ENCODE measurements at regions of chr12 and their contacts with region 1.

Region 1: DNA sequence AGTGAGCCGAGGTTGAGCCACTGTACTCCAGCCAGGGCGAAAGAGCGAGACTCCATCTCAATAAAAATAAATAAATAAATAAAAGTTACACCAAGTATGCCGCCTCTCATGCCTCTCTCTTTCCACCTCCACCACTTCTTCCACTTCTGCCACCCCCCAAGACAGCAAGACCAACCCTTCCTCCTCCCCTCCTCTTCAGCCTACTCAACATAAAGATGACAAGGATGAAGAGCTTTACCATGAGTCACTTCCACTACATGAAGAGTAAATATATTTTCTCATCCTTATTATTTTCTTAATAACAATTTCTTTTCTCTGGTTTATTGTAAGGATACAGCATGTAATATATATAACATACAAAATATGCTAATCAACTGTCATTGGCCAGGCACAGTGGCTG is 3.6 kb upstream of the TMED2 start:
- DNase-seq: no peak
- H3K4me3 ChIP-seq: no peak overlapping the region
- H3K27ac ChIP-seq: no peak overlapping the region
- H3K4me1 ChIP-seq: peaks cover 15 to 16% of the 10 kb centered on the region in 2 donors
- H3K27me3 ChIP-seq: no peaks in the 10 kb centered on the region
- CTCF ChIP-seq: no peak

Region 2: GRCh38 chr12:122895705-122896636 is 684.8 kb before region 1 on chr12 and contains the start of gene VPS37B:
- intact Hi-C with region 1: no loop called
- DNase-seq: peak; percentile 65 to 94
- H3K4me3 ChIP-seq: peak within 1 kb of the TSS; percentile 89 to 98
- H3K27ac ChIP-seq: peak within 1 kb of the TSS; percentile 84 to 94
- H3K4me1 ChIP-seq: peaks cover 0 to 28% of the 10 kb centered on the region in 2 donors
- H3K27me3 ChIP-seq: no peaks in the 10 kb centered on the region
- CTCF ChIP-seq: peak in 1 of 3 experiments; percentile 44
- total RNA-seq, gene VPS37B: 31.8 TPM

Region 3: GRCh38 chr12:123388177-123388947 is 192.4 kb before region 1 on chr12:
- intact Hi-C with region 1: loop called (anchors 1 kb)
- DNase-seq: peak; percentile 33 to 90
- H3K4me3 ChIP-seq: peak overlapping the region; percentile 57 to 71
- H3K27ac ChIP-seq: peak overlapping the region; percentile 84 to 93
- H3K4me1 ChIP-seq: peaks cover 11 to 41% of the 10 kb centered on the region in 2 donors
- H3K27me3 ChIP-seq: no peaks in the 10 kb centered on the region
- CTCF ChIP-seq: peak in 1 of 3 experiments; percentile 25

Region 4: DNA sequence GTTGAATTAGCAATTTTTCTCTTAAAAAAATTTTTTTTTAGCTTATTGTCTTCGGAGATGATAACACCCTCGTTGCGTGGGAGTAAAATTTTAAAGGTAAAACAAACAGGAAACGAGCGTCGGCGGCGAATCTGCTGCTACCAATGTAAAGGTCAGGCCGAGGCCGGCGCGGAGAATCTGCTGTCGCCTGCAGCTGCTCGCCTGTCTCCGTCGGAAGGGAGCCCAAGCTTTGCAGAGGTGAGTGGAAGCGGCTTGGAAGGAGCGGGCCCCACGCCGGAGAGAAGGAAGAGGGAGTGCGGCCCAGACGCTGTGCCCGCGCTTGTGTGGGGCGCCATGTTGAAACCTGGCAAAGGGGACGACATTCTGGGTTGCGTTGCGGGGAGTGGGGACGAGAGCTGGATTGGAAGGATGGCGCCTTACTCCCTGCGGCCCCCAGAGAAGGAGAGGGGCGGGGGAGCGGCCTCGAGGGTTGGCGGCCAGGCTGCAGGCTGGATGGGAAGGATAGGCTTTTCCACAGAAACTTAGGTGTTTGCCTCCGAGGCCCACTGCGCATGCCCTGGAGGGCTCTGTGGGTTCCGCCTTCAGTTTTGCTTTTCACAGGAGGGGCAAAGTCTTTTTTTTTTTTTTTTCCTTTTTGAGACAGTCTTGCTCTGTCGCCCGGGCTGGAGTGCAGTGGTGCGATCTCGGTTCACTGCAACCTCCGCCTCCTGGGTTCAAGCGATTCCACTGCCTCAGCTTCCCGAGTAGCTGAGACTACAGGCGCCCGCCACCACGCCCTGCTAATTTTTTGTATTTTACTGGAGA is 122.6 kb before region 1 on chr12 and contains the start of gene SNRNP35:
- intact Hi-C with region 1: loop called (anchors 5 kb)
- DNase-seq: peak; percentile 31 to 83
- H3K4me3 ChIP-seq: peak within 1 kb of the TSS; percentile 82 to 93
- H3K27ac ChIP-seq: peak within 1 kb of the TSS; percentile 97 to 99
- H3K4me1 ChIP-seq: peaks cover 0 to 12% of the 10 kb centered on the region in 2 donors
- H3K27me3 ChIP-seq: no peaks in the 10 kb centered on the region
- CTCF ChIP-seq: no peak
- total RNA-seq, gene SNRNP35: 5.9 TPM

Region 5: DNA sequence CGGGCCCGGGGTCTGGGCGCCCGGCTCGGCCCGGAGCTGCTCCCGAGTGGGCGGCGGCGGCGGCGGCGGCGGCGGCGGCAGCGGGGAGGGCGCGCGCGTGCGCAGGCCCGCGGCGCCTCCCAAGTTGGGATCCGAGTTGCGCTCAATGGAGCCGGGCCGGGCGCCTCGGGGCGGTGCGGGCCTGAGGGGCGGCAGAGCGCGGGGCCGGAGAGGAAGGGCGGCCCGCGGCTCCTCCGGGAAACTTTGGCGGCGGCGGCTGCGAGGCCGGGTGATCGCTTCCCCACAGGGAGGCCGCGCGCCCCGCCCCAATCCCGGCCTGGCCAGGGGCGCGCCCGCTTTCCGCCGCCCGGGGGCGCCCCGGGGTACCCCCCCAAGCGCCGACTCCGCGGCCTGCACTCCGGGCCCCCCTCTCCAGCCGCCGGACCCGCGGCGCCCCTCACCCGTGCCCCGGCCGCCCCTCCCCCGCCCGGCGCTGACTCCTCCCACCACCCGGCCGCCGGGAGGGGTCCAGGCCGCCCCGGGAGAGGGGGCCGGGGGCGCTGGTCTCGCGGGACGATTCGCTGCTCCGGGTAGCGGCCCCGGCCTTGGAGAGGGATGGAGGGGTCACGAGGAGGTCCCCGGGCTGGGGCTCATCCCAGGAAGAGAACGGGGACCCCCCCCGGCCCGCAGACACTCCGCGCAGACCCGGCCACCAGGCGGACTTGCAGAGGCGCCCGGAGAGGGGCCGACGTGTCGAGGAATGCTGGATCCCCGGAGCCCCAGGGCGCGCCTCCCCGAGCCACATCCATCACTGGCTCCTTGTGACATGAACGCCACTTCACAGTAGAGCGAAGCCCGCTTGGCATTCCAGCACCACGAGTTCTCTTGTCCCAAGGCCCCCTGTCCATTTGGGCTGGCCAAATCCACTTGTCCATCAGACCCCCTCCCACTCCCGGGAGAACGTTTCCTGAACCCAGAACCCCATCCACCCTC is 46.8 kb before region 1 on chr12 and contains the start of gene RILPL1:
- intact Hi-C with region 1: loop called (anchors 5 kb)
- DNase-seq: peak in 1 of 2 donors; percentile 68
- H3K4me3 ChIP-seq: peak within 1 kb of the TSS; percentile 89 to 93
- H3K27ac ChIP-seq: peak within 1 kb of the TSS; percentile 87 to 95
- H3K4me1 ChIP-seq: peaks cover 0 to 22% of the 10 kb centered on the region in 2 donors
- H3K27me3 ChIP-seq: no peaks in the 10 kb centered on the region
- CTCF ChIP-seq: peak; percentile 11 to 41 (median 22)
- total RNA-seq, gene RILPL1: 1.5 TPM

Region 6: DNA sequence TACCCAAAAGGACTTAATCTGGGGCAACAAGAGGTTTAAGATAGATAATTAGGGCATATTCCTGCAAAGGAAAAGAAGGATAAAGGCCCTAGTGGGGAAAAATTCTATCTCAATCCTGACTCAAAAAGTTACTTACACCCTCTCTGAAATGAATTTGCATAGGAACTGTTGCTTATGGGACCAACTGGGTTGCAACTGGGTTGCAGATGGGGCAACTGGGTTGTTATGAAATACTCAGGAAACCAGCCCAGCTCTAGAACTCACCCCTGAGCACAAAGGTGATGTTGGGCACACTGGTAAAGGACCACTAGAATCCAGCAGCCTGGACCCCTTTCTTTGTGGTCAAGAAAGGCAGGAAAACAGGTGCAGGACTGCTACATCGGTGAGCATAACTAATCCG is 30.1 kb before region 1 on chr12:
- intact Hi-C with region 1: no loop called
- DNase-seq: no peak
- H3K4me3 ChIP-seq: no peak overlapping the region
- H3K27ac ChIP-seq: no peak overlapping the region
- H3K4me1 ChIP-seq: no peaks in the 10 kb centered on the region
- H3K27me3 ChIP-seq: no peaks in the 10 kb centered on the region
- CTCF ChIP-seq: no peak

Measured in ascending aorta (tissue), 2 donors.